ENCODE measurements at regions of chr14 and their contacts with region 1.

Region 1: DNA sequence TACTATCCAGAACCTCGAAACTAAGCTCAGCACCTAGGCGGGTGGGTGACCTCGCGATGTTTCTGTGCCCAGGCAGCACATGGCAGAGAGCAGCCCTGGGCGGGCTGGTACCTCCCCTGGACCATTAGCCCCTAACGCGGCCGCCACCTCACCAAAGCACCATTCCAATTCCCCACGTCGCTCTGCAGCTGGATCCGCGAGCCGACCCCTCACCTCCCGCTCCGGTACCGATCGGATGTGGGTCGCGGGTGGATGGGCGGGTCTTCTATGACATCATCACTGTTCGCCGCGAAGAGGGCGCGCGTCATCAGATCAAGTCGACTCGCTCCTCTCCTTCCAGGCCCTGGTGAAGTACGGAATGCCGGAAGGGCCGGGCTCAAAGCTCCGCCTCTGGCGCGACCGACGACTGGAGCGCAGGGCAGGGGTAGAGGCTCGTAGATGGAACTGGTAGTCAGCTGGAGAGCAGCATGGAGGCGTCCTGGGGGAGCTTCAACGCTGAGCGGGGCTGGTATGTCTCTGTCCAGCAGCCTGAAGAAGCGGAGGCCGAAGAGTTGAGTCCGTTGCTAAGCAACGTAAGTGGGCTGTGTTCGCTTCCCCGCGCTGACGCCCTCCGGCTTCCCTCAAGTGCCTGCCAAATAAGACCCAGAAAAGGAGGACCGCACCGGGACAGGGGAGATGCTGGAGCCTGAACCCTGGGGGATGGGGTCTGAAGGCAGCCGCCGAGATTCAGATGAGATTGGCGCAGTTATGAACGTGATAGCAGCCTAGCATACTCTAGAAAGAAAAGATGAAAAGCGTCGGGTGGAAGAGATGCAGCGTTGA is at the starts of genes SLC38A6 and TRMT5:
- DNase-seq: peak; percentile 88 to 94
- H3K4me3 ChIP-seq: peak within 1 kb of the TSS; percentile 74
- H3K4me1 ChIP-seq: peaks cover 24% of the 10 kb centered on the region
- H3K27me3 ChIP-seq: no peaks in the 10 kb centered on the region

Region 2: GRCh38 chr14:60594062-60594461 is 387.0 kb before region 1 on chr14:
- in situ Hi-C with region 1: no loop called
- DNase-seq: no peak
- H3K4me3 ChIP-seq: no peak overlapping the region
- H3K4me1 ChIP-seq: no peaks in the 10 kb centered on the region
- H3K27me3 ChIP-seq: no peaks in the 10 kb centered on the region

Region 3: GRCh38 chr14:60648934-60649874 is 331.8 kb before region 1 on chr14 and contains the start of gene SIX1:
- in situ Hi-C with region 1: loop called (anchors 25 kb)
- DNase-seq: peak; percentile 86 to 89
- H3K4me3 ChIP-seq: peak within 1 kb of the TSS; percentile 54
- H3K4me1 ChIP-seq: peaks cover 17% of the 10 kb centered on the region
- H3K27me3 ChIP-seq: no peaks in the 10 kb centered on the region

Region 4: DNA sequence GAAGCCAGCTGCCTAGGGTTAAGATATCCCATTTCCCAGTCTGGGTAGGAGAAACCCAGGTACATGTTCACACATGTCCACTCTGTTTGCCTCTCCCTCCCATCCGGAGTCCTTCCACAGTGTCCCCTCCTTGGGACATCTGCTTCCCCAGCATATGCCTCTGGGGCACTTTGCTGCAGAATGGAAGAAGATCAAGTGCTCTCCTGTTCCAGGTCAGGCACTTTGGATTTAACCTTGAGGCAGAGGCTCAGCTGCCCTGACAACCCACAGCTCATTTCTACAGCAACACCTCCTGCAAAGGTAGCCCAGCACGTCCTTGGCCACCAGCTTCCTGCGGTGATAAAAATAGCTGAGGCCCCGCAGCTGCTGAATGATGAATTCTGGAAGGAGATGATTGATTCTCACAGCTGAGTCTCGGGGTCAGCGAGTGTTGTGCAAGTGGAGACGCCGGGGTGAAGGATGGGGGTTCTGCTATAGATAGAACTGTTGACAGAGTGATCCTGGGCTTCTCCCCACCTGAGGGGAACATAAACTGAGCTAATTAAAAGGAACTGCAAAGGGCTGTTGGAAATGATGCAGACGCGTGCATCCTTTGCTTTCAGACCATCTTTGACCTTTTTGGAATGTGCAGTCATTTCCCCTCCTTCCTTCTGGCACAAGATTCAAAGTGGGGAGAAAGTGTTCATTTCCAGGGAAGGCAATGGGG is 145.0 kb after region 1 on chr14:
- in situ Hi-C with region 1: no loop called
- DNase-seq: no peak
- H3K4me3 ChIP-seq: no peak overlapping the region
- H3K4me1 ChIP-seq: no peaks in the 10 kb centered on the region
- H3K27me3 ChIP-seq: no peaks in the 10 kb centered on the region